ENCODE measurements at regions of chr5 and their contacts with region 1.

Region 1: DNA sequence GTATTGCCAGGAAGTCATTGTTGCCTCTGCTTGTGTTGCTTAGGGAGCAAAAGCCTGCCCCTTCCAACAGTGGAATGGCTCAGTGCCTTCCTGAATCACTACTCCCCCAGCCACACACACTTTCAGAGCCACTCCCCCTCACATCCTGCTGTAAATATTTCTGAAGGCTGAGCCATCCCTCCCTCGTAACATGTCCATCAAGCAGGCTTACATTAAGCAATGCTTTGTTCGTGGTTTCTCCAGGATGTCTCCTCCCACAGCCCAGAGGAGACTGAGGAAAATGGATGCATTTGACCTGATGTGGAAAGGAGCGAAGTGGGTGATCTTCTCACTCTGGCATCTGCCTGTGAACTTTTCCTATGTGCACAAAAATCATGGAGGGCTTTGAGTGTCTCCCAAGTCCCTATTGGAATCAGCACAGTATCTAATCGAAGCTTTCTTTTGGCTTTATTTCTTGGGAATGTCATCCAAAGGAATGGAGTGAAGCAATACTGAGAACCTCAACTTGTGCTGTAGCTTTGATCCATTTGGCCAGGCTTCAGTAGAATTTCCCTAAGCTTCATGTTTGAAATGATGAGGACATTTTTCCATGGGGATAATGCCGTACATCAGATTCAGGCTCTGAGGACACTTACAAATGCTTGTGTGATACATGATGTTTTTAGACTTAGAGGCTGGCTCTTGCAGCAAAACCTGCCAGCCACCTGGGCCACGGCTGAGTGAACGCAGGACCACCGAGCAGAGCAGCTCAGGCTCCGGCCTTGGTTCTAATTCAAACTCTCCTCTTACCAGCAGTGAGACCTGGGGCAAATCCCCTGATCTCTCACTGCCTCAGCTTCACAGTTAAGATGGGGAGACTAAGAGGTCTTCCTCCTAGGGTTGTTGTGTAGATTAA is 389.1 kb downstream of the ENC1 start:
- DNase-seq: peak; percentile 33
- H3K4me3 ChIP-seq: no peak overlapping the region
- H3K27ac ChIP-seq: peak overlapping the region; percentile 60
- H3K4me1 ChIP-seq: no peaks in the 10 kb centered on the region
- H3K27me3 ChIP-seq: no peaks in the 10 kb centered on the region
- CTCF ChIP-seq: no peak

Region 2: GRCh38 chr5:74167206-74167929 is 84.0 kb before region 1 on chr5:
- intact Hi-C with region 1: loop called (anchors 5 kb)
- DNase-seq: no peak
- H3K4me3 ChIP-seq: no peak overlapping the region
- H3K27ac ChIP-seq: no peak overlapping the region
- H3K4me1 ChIP-seq: no peaks in the 10 kb centered on the region
- H3K27me3 ChIP-seq: no peaks in the 10 kb centered on the region
- CTCF ChIP-seq: no peak

Measured in colonic mucosa (tissue), 4 donors.